AG04449 (cell line): ENCODE measurements at regions of chr4 and their contacts with region 1.

Region 1: DNA sequence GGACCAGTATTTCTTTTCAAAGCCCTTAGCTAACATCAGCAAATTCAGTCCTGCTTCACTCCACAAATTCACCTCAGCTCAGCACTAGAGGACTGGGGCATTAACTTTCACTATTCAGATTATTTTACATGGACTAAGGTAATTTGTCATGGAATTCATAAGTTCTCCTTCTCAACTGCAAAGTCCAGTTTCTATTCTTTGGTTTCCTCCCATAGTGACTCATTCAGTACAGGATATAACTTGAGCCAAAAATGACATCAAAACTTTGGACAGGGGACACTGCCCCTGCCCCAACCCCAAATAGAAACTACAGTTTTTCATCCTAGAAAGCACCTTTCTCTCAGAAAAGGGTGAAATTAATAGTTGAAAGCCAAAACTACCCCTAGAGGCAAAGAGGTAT is 52.7 kb downstream of the COX7B2 start:
- DNase-seq: no peak
- H3K4me3 ChIP-seq: no peak overlapping the region
- CTCF ChIP-seq: no peak

Region 2: DNA sequence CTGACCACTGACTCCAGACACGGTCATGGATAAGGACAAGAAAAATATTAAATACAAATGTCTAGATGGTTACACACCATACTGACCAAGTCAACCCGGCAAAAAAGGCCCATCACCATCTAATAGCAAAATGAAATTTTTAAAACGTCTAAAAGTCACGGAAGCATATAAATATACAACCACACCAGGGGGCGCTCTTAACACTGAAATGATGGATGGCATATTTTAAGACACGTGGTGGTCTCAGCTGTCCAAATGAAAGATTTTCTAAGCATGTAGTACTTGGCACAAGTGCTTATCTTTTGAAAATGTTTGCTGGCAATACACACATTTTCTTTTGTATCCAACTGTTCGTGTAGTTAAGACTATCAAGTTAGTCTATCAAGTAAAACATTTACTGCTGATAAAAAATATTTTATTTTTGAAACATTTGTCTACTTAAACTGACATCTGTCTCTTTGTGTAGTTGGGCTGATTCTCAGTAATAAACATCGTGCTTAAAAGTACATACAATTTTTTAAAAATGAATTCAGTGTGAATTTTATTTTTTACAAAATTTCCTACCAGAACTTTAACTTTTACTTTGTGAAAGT is 11.9 kb before region 1 on chr4:
- CTCF ChIA-PET with region 1: interaction called, 15 read pairs
- POLR2A ChIA-PET with region 1: no interaction called
- DNase-seq: peak; percentile 7
- H3K4me3 ChIP-seq: no peak overlapping the region
- CTCF ChIP-seq: peak; percentile 49